Calu3 (cell line): ENCODE measurements at regions of chr7 and their contacts with region 1.

Region 1: GRCh38 chr7:24637706-24638105 is 64.5 kb downstream of the PALS2 start:
- DNase-seq: no peak
- H3K4me3 Mint-ChIP-seq: no peak overlapping the region
- H3K27ac Mint-ChIP-seq: no peak overlapping the region
- H3K4me1 Mint-ChIP-seq: no peaks in the 10 kb centered on the region
- H3K27me3 Mint-ChIP-seq: no peaks in the 10 kb centered on the region
- CTCF ChIP-seq: no peak

Region 2: GRCh38 chr7:22802426-22802825 is 1835.3 kb before region 1 on chr7:
- CTCF ChIA-PET with region 1: interaction called, 10 read pairs
- intact Hi-C with region 1: no loop called
- DNase-seq: no peak
- H3K4me3 Mint-ChIP-seq: no peak overlapping the region
- H3K27ac Mint-ChIP-seq: no peak overlapping the region
- H3K4me1 Mint-ChIP-seq: no peaks in the 10 kb centered on the region
- H3K27me3 Mint-ChIP-seq: peaks cover 16% of the 10 kb centered on the region
- CTCF ChIP-seq: no peak

Region 3: GRCh38 chr7:24510759-24511158 is 126.9 kb before region 1 on chr7:
- CTCF ChIA-PET with region 1: no interaction called
- intact Hi-C with region 1: no loop called
- DNase-seq: no peak
- H3K4me3 Mint-ChIP-seq: no peak overlapping the region
- H3K27ac Mint-ChIP-seq: no peak overlapping the region
- H3K4me1 Mint-ChIP-seq: no peaks in the 10 kb centered on the region
- H3K27me3 Mint-ChIP-seq: peaks cover 71% of the 10 kb centered on the region
- CTCF ChIP-seq: no peak

Region 4: DNA sequence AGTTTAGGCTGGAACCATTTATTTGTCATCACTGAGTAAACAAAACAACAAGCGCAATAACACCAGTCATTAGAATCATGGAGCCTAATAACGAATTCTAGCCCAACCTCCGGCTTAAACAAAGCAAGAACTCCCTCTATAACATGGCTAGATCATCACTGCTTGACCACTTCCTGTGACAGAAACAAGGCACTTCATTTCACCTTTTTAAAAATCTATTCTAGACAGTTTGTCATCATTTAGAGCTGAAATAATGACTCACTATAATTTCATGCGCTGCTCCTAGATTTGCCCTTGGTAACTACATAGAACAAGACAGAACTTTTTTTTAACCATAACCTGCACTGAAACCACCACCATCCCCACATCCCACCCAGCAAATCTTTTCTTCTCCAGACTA is 261.0 kb after region 1 on chr7:
- CTCF ChIA-PET with region 1: no interaction called
- intact Hi-C with region 1: no loop called
- DNase-seq: no peak
- H3K4me3 Mint-ChIP-seq: no peak overlapping the region
- H3K27ac Mint-ChIP-seq: peak overlapping the region; percentile 15
- H3K4me1 Mint-ChIP-seq: peaks cover 16% of the 10 kb centered on the region
- H3K27me3 Mint-ChIP-seq: no peaks in the 10 kb centered on the region
- CTCF ChIP-seq: no peak